Activated CD4-positive, alpha-beta memory T cell treated with anti-CD3 and anti-CD28 coated beads for 36 hours (primary cell): ENCODE measurements at regions of chr1 and their contacts with region 1.

Region 1: GRCh38 chr1:212284744-212285684 is at the start of gene PPP2R5A:
- DNase-seq: peak; percentile 99
- H3K4me3 Mint-ChIP-seq: peak within 1 kb of the TSS; percentile 92
- H3K27ac Mint-ChIP-seq: peak within 1 kb of the TSS; percentile 93
- H3K4me1 Mint-ChIP-seq: peaks cover 31% of the 10 kb centered on the region
- H3K27me3 Mint-ChIP-seq: no peaks in the 10 kb centered on the region
- total RNA-seq, gene PPP2R5A: 38.6 to 40.4 TPM

Region 2: DNA sequence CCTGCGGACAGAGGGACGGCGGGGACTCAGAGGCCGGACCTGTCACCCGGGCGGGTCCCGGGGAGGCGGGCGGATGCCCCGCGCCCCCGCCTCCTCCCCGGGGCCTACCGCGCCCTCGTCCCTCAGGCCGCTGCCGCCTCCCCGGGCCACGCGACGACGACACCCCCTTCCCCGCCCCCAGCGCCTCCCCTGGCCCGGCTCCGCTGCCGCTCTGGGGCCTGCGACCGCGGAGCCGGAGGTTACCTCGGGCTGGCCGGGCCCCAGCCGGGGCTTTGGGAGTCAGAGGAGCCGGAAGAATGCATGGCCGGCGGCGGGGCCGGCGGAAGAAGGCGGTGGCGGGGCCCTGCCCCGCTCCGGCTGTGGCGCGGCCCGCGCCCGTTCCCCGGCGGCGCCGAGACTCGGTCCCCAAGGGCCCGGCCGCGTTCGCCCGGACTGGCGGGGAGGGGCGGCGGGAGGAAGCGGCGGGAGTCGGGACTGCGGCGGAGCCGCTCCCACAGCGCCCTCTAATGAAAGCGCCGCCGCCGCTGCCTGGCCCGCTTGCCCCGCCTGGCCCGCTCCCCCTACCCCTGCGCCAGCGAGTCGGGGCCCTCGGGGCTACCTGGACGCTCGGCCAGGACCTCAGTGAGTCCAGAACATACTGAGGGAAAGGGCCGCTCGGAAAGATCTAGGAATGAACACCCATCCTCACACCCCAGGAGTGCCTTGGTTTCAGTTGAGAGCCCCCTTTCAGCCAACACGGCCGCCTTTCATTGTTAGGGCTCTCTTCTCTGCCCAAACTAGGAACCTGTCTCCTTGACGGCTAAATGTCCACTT is 454.5 kb before region 1 on chr1 and contains the start of gene LPGAT1:
- CTCF ChIA-PET with region 1: no interaction called
- POLR2A ChIA-PET with region 1: no interaction called
- intact Hi-C with region 1: loop called (anchors 5 kb)
- DNase-seq: peak; percentile 77
- H3K4me3 Mint-ChIP-seq: peak within 1 kb of the TSS; percentile 86
- H3K27ac Mint-ChIP-seq: peak within 1 kb of the TSS; percentile 83
- H3K4me1 Mint-ChIP-seq: peaks cover 61% of the 10 kb centered on the region
- H3K27me3 Mint-ChIP-seq: no peaks in the 10 kb centered on the region
- total RNA-seq, gene LPGAT1: 31.8 to 34.7 TPM

Region 3: DNA sequence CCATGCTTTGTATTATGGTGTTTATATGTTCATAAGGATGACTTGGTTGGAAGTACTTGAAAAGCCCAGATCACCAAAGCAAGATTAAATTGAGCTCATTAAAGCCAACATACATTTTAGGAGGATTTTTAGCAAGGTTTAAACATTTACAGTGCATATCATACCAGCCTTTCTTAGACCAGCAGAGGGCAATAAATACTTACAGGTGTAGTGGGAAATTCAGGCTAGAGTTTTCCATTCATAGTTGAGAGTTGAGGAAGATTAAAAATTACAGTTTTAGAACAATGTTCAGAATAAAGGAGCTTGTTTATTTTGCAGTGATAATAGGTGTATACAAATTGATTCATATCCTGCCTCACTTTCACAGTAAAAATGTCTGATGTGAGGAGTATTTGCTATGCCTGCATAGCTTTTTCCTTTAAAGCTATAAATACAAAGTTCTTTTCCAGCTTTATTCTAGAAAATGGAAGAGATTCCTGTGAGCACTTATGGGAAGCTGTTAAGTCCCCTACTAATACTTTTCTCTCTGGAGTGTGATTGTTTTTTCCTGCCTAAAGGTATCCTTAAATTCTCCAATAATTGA is 214.2 kb before region 1 on chr1:
- CTCF ChIA-PET with region 1: interaction called, 22 read pairs
- POLR2A ChIA-PET with region 1: no interaction called
- intact Hi-C with region 1: loop called (anchors 2 kb)
- DNase-seq: no peak
- H3K4me3 Mint-ChIP-seq: no peak overlapping the region
- H3K27ac Mint-ChIP-seq: peak overlapping the region; percentile 32
- H3K4me1 Mint-ChIP-seq: no peaks in the 10 kb centered on the region
- H3K27me3 Mint-ChIP-seq: no peaks in the 10 kb centered on the region

Region 4: GRCh38 chr1:212196355-212196754 is 88.7 kb before region 1 on chr1:
- CTCF ChIA-PET with region 1: no interaction called
- POLR2A ChIA-PET with region 1: no interaction called
- intact Hi-C with region 1: no loop called
- DNase-seq: no peak
- H3K4me3 Mint-ChIP-seq: no peak overlapping the region
- H3K27ac Mint-ChIP-seq: no peak overlapping the region
- H3K4me1 Mint-ChIP-seq: no peaks in the 10 kb centered on the region
- H3K27me3 Mint-ChIP-seq: no peaks in the 10 kb centered on the region

Region 5: DNA sequence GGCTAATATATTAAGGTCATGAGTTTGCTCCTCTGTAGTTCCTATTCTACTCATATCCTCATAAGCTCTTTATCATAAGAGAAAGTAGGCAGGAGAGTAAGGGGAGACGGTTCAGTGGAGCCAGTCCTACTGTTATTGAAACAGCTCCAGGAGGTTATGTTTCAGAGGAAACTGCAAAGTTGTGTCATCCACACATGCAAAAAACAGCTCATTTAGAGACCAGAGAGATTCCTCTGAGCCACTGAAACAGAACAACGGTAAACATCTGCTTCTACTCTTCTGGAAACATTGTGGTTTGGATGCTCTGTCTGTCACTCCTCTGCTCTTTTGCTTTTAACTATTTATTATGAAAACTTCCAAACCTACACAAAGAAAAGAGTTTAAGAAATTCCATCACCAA is 66.1 kb before region 1 on chr1:
- CTCF ChIA-PET with region 1: interaction called, 4 read pairs
- POLR2A ChIA-PET with region 1: interaction called, 3 read pairs
- intact Hi-C with region 1: loop called (anchors 1 kb)
- DNase-seq: peak; percentile 42
- H3K4me3 Mint-ChIP-seq: no peak overlapping the region
- H3K27ac Mint-ChIP-seq: no peak overlapping the region
- H3K4me1 Mint-ChIP-seq: peaks cover 18% of the 10 kb centered on the region
- H3K27me3 Mint-ChIP-seq: peaks cover 2% of the 10 kb centered on the region

Region 6: DNA sequence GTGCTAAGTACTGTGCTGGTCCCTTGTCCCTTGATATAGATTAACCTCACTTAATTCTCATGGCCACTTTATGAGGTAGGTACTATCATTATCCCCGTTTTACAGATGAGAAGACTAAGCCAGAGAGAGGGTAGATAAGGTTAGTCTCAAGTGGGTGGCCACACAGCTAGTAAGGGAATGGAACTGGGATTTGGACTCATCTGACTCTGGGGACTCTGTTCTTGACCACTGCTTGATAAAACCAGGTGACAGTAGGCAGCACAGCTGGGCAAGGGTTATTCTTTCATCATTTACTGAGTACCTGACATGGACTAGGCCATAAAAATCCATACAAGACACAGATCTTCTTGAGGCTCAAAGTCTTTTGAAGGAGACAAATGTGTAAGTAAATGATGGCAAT is 37.0 kb before region 1 on chr1:
- CTCF ChIA-PET with region 1: no interaction called
- POLR2A ChIA-PET with region 1: no interaction called
- intact Hi-C with region 1: no loop called
- DNase-seq: no peak
- H3K4me3 Mint-ChIP-seq: no peak overlapping the region
- H3K27ac Mint-ChIP-seq: no peak overlapping the region
- H3K4me1 Mint-ChIP-seq: peaks cover 10% of the 10 kb centered on the region
- H3K27me3 Mint-ChIP-seq: no peaks in the 10 kb centered on the region

Region 7: GRCh38 chr1:212260557-212261355 is 24.3 kb before region 1 on chr1:
- CTCF ChIA-PET with region 1: interaction called, 4 read pairs
- POLR2A ChIA-PET with region 1: interaction called, 3 read pairs
- intact Hi-C with region 1: loop called (anchors 1 kb)
- DNase-seq: peak; percentile 45
- H3K4me3 Mint-ChIP-seq: no peak overlapping the region
- H3K27ac Mint-ChIP-seq: peak overlapping the region; percentile 4
- H3K4me1 Mint-ChIP-seq: peaks cover 34% of the 10 kb centered on the region
- H3K27me3 Mint-ChIP-seq: no peaks in the 10 kb centered on the region

Region 8: GRCh38 chr1:212323066-212323465 is 38.1 kb after region 1 on chr1:
- CTCF ChIA-PET with region 1: no interaction called
- POLR2A ChIA-PET with region 1: no interaction called
- intact Hi-C with region 1: no loop called
- DNase-seq: no peak
- H3K4me3 Mint-ChIP-seq: no peak overlapping the region
- H3K27ac Mint-ChIP-seq: no peak overlapping the region
- H3K4me1 Mint-ChIP-seq: peaks cover 24% of the 10 kb centered on the region
- H3K27me3 Mint-ChIP-seq: no peaks in the 10 kb centered on the region

Region 9: GRCh38 chr1:212355230-212355969 is 70.4 kb after region 1 on chr1:
- CTCF ChIA-PET with region 1: no interaction called
- POLR2A ChIA-PET with region 1: interaction called, 4 read pairs
- intact Hi-C with region 1: loop called (anchors 2 kb)
- DNase-seq: no peak
- H3K4me3 Mint-ChIP-seq: no peak overlapping the region
- H3K27ac Mint-ChIP-seq: no peak overlapping the region
- H3K4me1 Mint-ChIP-seq: peaks cover 22% of the 10 kb centered on the region
- H3K27me3 Mint-ChIP-seq: no peaks in the 10 kb centered on the region